ENCODE measurements at regions of chr16 and their contacts with region 1.

Region 1: GRCh38 chr16:58377932-58378331 is 14.3 kb upstream of the GINS3 start:
- DNase-seq: peak; percentile 60
- H3K4me3 ChIP-seq: peak overlapping the region in 1 of 3 experiments; percentile 15
- H3K27ac ChIP-seq: peak overlapping the region; percentile 85
- H3K4me1 ChIP-seq: peaks cover 34% of the 10 kb centered on the region
- H3K27me3 ChIP-seq: no peaks in the 10 kb centered on the region
- CTCF ChIP-seq: no peak
- POLR2A ChIP-seq: no peak

Region 2: GRCh38 chr16:58392215-58393137 is 14.5 kb after region 1 on chr16 and contains the start of gene GINS3:
- CTCF ChIA-PET with region 1: no interaction called
- POLR2A ChIA-PET with region 1: no interaction called
- dilution Hi-C with region 1: no loop called
- intact Hi-C with region 1: loop called (anchors 1 kb)
- DNase-seq: peak; percentile 82
- H3K4me3 ChIP-seq: peak within 1 kb of the TSS; percentile 89 to 96 (median 95)
- H3K27ac ChIP-seq: peak within 1 kb of the TSS; percentile 79
- H3K4me1 ChIP-seq: peaks cover 9% of the 10 kb centered on the region
- H3K27me3 ChIP-seq: no peaks in the 10 kb centered on the region
- CTCF ChIP-seq: no peak
- POLR2A ChIP-seq: no peak
- total RNA-seq, gene GINS3: 24.1 and 29.0 TPM in 2 replicates

Region 3: DNA sequence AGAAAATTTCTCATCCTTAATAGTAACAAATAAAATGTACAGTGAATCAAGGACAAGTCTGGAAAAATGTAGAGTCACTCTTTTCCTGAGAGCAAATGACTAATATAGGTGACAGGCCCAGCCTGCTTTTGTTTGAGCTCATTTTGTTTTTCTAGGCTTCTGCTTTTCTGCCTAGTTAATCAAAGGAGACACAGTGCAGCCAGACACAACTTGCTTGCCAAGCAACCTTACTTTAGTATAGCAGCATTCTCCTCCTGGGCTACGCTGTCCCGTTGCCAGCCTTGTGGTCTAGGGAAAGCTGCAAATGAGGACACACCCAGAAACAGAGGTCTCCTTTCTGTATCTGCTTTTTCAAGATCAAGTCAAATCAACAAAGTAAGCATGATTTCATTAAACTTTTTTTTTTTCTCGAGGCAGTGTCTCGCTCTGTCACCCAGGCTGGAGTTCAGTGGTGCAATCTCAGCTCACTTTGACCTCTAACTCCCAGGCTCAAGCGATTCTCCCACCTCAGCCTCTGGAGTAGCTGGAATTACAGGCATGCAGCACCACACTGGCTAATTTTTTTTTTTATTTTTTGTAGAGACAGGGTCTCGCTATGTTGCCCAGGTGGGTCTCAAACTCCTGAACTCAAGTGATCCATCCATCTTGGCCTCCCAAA is 31.5 kb after region 1 on chr16:
- CTCF ChIA-PET with region 1: no interaction called
- POLR2A ChIA-PET with region 1: no interaction called
- dilution Hi-C with region 1: no loop called
- intact Hi-C with region 1: loop called (anchors 1 kb)
- DNase-seq: peak; percentile 90
- H3K4me3 ChIP-seq: no peak overlapping the region
- H3K27ac ChIP-seq: peak overlapping the region; percentile 79
- H3K4me1 ChIP-seq: peaks cover 15% of the 10 kb centered on the region
- H3K27me3 ChIP-seq: no peaks in the 10 kb centered on the region
- CTCF ChIP-seq: no peak
- POLR2A ChIP-seq: no peak

Region 4: DNA sequence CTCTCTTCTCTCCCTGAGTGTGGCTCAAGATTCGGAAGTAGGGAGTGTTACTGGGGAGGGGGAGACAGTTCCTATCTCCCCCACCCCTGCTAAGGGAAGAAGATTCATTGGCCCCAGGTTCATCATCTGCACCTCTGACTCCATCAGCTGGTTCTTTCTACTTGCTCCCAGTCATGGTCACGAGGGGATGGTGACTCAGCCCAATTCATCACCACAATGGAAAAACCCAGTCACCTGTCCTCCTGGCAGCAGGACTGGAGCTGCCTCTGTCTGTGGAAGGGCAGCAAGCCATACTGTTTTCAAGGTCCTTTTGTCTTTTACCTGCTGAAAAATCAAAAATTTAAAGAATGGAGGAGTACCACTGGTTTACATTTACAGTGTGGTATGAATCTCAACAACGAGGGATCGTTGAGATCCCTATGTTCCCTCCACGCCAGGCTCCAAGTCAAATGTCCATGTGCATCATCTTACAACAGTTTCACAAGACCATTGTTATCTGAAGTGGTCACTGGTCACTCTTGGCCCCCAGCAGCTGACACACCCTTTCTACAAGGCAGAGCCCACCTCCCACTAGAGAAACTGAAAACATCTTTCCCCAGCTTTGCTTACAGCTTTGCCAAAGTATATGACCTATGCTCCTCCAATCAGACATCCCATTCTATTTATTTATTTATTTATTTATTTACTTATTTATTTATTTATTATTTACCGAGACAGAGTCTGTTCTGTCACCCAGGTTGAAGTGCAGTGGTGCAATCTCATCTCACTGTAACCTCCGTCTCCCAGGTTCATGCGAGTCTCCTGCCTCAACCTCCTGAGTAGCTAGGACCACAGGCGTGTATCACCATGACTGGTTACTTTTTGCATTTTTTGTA is 81.6 kb after region 1 on chr16:
- CTCF ChIA-PET with region 1: no interaction called
- POLR2A ChIA-PET with region 1: no interaction called
- dilution Hi-C with region 1: no loop called
- intact Hi-C with region 1: no loop called
- DNase-seq: peak; percentile 87
- H3K4me3 ChIP-seq: no peak overlapping the region
- H3K27ac ChIP-seq: no peak overlapping the region
- H3K4me1 ChIP-seq: peaks cover 32% of the 10 kb centered on the region
- H3K27me3 ChIP-seq: peaks cover 0 to 4% of the 10 kb centered on the region in 2 experiments
- CTCF ChIP-seq: no peak
- POLR2A ChIP-seq: no peak

Region 5: GRCh38 chr16:58481931-58482330 is 104.0 kb after region 1 on chr16:
- CTCF ChIA-PET with region 1: no interaction called
- POLR2A ChIA-PET with region 1: no interaction called
- dilution Hi-C with region 1: no loop called
- intact Hi-C with region 1: no loop called
- DNase-seq: no peak
- H3K4me3 ChIP-seq: no peak overlapping the region
- H3K27ac ChIP-seq: no peak overlapping the region
- H3K4me1 ChIP-seq: no peaks in the 10 kb centered on the region
- H3K27me3 ChIP-seq: no peaks in the 10 kb centered on the region
- CTCF ChIP-seq: no peak
- POLR2A ChIP-seq: no peak

Measured in endothelial cell of umbilical vein (primary cell).